ENCODE measurements at regions of chr5 and their contacts with region 1.

Region 1: DNA sequence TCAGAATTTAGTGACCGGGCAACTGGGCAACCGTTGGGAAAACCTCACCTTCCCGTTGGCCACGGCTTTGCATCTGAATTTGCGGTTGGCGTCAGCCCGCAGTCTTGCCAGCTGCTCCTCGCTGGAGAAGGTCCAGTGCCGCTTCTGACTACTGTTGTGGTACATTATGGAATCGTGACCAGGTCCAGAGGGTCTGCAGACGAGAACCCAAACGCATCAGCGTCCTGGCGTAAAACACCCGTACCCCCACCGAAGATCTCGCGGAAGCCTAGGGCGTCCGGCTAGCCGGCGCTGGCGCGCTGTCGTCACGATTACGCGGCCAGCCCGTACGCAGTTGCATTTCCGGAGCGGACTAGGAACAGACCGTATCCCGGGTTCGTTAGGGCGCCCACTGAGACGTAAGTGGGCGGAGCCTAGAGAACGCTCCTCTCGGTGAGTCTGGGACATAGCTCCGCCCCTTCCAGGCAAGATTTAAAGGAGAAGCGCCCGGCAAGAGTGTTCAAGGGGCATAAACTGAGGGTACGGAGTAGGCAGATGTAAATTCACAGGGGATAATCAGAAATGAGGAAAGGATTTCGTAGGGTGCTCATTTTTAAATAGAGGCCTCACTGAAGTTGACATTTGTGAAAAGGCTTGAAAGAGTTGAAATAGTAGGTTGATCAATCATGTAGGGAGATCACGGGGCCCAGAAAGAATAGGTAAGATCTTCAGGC is at the start of gene CCNH:
- DNase-seq: peak; percentile 94 to 98 (median 97)
- H3K4me3 ChIP-seq: peak within 1 kb of the TSS; percentile 92 to 96
- H3K4me3 Mint-ChIP-seq: peak within 1 kb of the TSS; percentile 94 to 99 (median 98)
- H3K27ac ChIP-seq: peak within 1 kb of the TSS; percentile 100
- H3K27ac Mint-ChIP-seq: peak within 1 kb of the TSS; percentile 88 to 100 (median 99)
- H3K4me1 ChIP-seq: peaks cover 46% of the 10 kb centered on the region
- H3K4me1 Mint-ChIP-seq: peaks cover 38 to 54% (median 42%) of the 10 kb centered on the region in 4 donors
- H3K27me3 ChIP-seq: no peaks in the 10 kb centered on the region
- H3K27me3 Mint-ChIP-seq: no peaks in the 10 kb centered on the region
- total RNA-seq, gene CCNH: 93.9 to 98.6 TPM

Region 2: GRCh38 chr5:86617756-86618576 is 794.8 kb before region 1 on chr5 and contains the start of gene COX7C:
- CTCF ChIA-PET with region 1: no interaction called
- POLR2A ChIA-PET with region 1: interaction called, 17 read pairs
- intact Hi-C with region 1: loop called (anchors 1 kb)
- DNase-seq: peak; percentile 92 to 96 (median 95)
- H3K4me3 ChIP-seq: peak within 1 kb of the TSS; percentile 82 to 98
- H3K4me3 Mint-ChIP-seq: peak within 1 kb of the TSS; percentile 95 to 100 (median 100)
- H3K27ac ChIP-seq: peak within 1 kb of the TSS; percentile 98
- H3K27ac Mint-ChIP-seq: peak within 1 kb of the TSS; percentile 97 to 100 (median 100)
- H3K4me1 ChIP-seq: peaks cover 17% of the 10 kb centered on the region
- H3K4me1 Mint-ChIP-seq: peaks cover 15 to 36% (median 27%) of the 10 kb centered on the region in 4 donors
- H3K27me3 ChIP-seq: no peaks in the 10 kb centered on the region
- H3K27me3 Mint-ChIP-seq: peaks cover 3 to 9% of the 10 kb centered on the region in 2 donors
- total RNA-seq, gene COX7C: 474 to 489 TPM

Region 3: DNA sequence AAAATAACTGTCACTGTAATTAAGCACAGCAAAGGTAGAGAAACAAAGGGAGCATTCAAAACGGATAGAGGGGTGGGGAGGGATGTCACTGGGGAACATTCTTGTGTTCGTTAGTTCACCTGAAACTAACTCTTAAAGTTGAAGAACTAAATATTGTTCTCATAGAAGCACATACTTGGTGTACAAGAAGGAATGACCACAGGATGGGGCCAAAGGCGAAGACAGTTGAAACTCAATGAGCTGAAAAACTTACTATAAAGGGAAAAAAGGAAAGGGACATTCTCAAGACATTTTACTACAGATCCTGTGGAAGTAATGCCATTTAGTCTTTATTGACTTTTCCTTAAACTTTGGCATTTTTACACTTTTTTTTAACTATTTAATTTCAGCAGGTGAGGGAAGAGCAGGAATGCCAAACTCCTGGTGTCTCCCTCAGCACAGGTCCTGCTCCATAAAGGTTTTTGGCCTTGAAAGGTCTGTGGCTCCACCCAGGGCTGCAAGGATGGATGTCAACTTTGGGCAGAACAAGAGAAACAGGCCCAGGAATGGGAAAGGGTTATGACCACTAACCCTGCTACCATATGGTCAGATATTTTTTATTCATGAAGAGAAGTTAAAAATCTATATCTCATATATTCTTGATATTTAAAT is 342.7 kb before region 1 on chr5:
- CTCF ChIA-PET with region 1: interaction called, 3 read pairs
- POLR2A ChIA-PET with region 1: interaction called, 10 read pairs
- intact Hi-C with region 1: no loop called
- DNase-seq: peak in 1 of 5 donors; percentile 3
- H3K4me3 ChIP-seq: no peak overlapping the region
- H3K4me3 Mint-ChIP-seq: no peak overlapping the region
- H3K27ac ChIP-seq: no peak overlapping the region
- H3K27ac Mint-ChIP-seq: peak overlapping the region in 1 of 7 donors; percentile 69
- H3K4me1 ChIP-seq: peaks cover 13% of the 10 kb centered on the region
- H3K4me1 Mint-ChIP-seq: peaks cover 14 to 26% (median 22%) of the 10 kb centered on the region in 4 donors
- H3K27me3 ChIP-seq: no peaks in the 10 kb centered on the region
- H3K27me3 Mint-ChIP-seq: no peaks in the 10 kb centered on the region

Region 4: DNA sequence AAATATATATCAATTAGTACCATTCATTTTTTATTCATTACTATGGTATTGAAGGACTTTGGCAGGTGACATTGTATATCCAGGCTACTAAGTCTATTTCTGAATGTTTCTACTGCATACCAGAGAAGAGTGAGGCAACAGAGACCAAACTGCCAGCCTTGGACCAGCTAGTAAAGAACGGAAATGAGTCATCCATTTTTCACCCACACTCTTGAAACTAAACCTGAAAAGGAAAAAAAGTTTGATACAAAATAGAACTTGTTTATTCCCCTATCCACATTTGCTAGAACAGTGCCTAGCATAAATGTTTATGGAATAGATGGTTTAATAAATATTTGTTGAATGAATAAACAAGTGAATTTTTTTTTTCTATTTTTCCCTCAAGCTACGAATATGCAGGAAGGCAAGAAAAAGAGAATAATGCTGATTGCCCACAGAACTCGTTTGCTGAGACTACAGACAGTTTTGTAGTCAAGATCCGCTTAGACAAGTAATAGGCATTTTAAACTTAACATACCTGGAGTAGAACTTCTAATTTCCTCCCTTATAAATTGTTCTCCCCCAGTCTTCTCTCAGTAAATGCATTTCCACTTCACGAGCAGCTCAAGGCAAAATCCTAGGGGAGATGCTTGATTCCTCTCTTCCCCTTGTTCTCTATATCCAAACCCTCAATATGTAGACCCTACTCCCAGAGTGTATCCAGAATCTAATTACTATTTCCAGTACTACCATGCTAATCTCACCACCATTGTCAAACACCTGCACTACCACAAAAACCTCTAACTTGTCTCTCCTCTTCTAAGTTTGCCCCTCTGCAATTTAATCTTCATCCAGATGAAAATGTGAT is 291.3 kb before region 1 on chr5:
- CTCF ChIA-PET with region 1: no interaction called
- POLR2A ChIA-PET with region 1: interaction called, 6 read pairs
- intact Hi-C with region 1: loop called (anchors 2 kb)
- DNase-seq: peak; percentile 29 to 69 (median 46)
- H3K4me3 ChIP-seq: no peak overlapping the region
- H3K4me3 Mint-ChIP-seq: peak overlapping the region; percentile 40 to 88 (median 78)
- H3K27ac ChIP-seq: peak overlapping the region; percentile 34
- H3K27ac Mint-ChIP-seq: peak overlapping the region; percentile 54 to 93 (median 83)
- H3K4me1 ChIP-seq: peaks cover 37% of the 10 kb centered on the region
- H3K4me1 Mint-ChIP-seq: peaks cover 26 to 48% (median 37%) of the 10 kb centered on the region in 4 donors
- H3K27me3 ChIP-seq: no peaks in the 10 kb centered on the region
- H3K27me3 Mint-ChIP-seq: no peaks in the 10 kb centered on the region

Region 5: DNA sequence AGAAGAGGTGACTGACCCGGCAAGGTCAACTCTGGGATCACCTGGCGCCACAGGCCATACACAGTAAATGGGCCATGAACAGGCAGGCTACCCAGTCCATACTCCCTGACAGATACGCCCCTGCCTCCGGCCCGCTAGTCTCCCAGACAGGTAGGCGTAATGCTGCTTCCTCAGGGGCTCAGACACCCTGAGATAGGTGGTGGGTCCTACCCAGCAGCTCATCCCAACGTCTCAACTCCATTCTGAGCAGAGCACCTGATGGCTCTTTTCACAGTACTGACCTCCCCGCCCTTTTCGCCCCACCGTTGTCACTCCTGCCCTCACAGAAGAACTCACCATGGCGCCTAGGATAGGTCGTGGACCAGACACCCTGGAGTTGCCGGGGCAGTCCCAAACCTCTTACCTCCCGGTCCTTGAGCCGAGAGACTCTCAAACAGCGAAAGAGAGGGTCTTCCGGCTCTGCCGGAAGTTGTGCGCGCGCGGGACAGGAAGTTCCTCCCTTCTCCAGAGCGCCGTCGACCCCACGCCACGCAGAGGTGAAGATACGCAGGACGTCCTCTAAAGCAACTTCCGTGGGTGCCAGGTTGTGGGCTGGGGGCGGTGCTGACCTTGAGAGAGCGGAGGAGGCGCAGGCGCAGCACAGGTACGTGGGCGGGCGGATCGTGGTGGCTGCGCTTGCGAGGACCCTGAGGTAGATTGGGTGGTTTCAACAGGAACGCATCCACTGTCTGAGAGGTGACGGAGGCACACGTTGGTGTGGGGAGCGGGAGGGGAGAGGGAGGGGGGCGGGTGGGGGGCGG is 855.8 kb after region 1 on chr5 and contains the start of gene TMEM161B:
- CTCF ChIA-PET with region 1: no interaction called
- POLR2A ChIA-PET with region 1: interaction called, 5 read pairs
- intact Hi-C with region 1: loop called (anchors 2 kb)
- DNase-seq: peak; percentile 92 to 98 (median 96)
- H3K4me3 ChIP-seq: peak within 1 kb of the TSS; percentile 80 to 94
- H3K4me3 Mint-ChIP-seq: peak within 1 kb of the TSS; percentile 95 to 100 (median 100)
- H3K27ac ChIP-seq: peak within 1 kb of the TSS; percentile 87
- H3K27ac Mint-ChIP-seq: peak within 1 kb of the TSS; percentile 97 to 100 (median 99)
- H3K4me1 ChIP-seq: peaks cover 50% of the 10 kb centered on the region
- H3K4me1 Mint-ChIP-seq: peaks cover 34 to 75% (median 50%) of the 10 kb centered on the region in 4 donors
- H3K27me3 ChIP-seq: no peaks in the 10 kb centered on the region
- H3K27me3 Mint-ChIP-seq: no peaks in the 10 kb centered on the region
- total RNA-seq, gene TMEM161B: 32.3 to 33.7 TPM